ENCODE measurements at regions of chr10 and their contacts with region 1.

Region 1: GRCh38 chr10:122435212-122435827 is 19.1 kb upstream of the ARMS2 start:
- DNase-seq: no peak
- ATAC-seq: peak; percentile 55
- H3K4me3 Mint-ChIP-seq: no peak overlapping the region
- H3K27ac Mint-ChIP-seq: no peak overlapping the region
- H3K4me1 Mint-ChIP-seq: no peaks in the 10 kb centered on the region
- H3K27me3 Mint-ChIP-seq: peaks cover 4% of the 10 kb centered on the region

Region 2: GRCh38 chr10:122267849-122268737 is 167.2 kb before region 1 on chr10:
- CTCF ChIA-PET with region 1: interaction called, 12 read pairs
- POLR2A ChIA-PET with region 1: no interaction called
- DNase-seq: peak; percentile 64
- ATAC-seq: peak; percentile 93
- H3K4me3 Mint-ChIP-seq: no peak overlapping the region
- H3K27ac Mint-ChIP-seq: no peak overlapping the region
- H3K4me1 Mint-ChIP-seq: no peaks in the 10 kb centered on the region
- H3K27me3 Mint-ChIP-seq: peaks cover 6% of the 10 kb centered on the region

Region 3: DNA sequence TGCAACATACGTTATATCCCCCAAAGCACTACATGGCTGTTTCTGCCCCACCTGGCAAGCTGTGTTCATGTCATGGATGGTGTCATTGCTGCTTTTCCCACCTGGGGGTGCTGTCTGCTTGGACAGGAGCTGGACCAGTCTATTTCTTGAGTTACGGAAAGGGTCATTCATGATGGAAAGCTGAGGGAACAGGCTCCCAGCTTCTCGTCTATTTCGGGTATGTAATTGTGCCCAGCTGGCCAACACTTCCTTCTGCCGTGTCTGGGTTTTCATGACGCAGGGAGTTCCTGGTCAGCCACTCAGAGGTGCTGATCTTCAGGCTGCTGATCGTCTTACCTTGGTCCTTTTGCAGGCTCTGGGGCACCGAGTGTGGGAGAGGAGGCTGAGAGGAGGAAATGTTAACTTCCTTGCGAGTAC is 155.6 kb before region 1 on chr10:
- CTCF ChIA-PET with region 1: interaction called, 11 read pairs
- POLR2A ChIA-PET with region 1: no interaction called
- DNase-seq: peak; percentile 31
- ATAC-seq: no peak
- H3K4me3 Mint-ChIP-seq: no peak overlapping the region
- H3K27ac Mint-ChIP-seq: no peak overlapping the region
- H3K4me1 Mint-ChIP-seq: no peaks in the 10 kb centered on the region
- H3K27me3 Mint-ChIP-seq: peaks cover 15% of the 10 kb centered on the region

Region 4: GRCh38 chr10:122298598-122299301 is 136.6 kb before region 1 on chr10:
- CTCF ChIA-PET with region 1: interaction called, 77 read pairs
- POLR2A ChIA-PET with region 1: no interaction called
- DNase-seq: peak; percentile 74
- ATAC-seq: peak; percentile 84
- H3K4me3 Mint-ChIP-seq: peak overlapping the region; percentile 15
- H3K27ac Mint-ChIP-seq: no peak overlapping the region
- H3K4me1 Mint-ChIP-seq: peaks cover 24% of the 10 kb centered on the region
- H3K27me3 Mint-ChIP-seq: peaks cover 22% of the 10 kb centered on the region

Region 5: DNA sequence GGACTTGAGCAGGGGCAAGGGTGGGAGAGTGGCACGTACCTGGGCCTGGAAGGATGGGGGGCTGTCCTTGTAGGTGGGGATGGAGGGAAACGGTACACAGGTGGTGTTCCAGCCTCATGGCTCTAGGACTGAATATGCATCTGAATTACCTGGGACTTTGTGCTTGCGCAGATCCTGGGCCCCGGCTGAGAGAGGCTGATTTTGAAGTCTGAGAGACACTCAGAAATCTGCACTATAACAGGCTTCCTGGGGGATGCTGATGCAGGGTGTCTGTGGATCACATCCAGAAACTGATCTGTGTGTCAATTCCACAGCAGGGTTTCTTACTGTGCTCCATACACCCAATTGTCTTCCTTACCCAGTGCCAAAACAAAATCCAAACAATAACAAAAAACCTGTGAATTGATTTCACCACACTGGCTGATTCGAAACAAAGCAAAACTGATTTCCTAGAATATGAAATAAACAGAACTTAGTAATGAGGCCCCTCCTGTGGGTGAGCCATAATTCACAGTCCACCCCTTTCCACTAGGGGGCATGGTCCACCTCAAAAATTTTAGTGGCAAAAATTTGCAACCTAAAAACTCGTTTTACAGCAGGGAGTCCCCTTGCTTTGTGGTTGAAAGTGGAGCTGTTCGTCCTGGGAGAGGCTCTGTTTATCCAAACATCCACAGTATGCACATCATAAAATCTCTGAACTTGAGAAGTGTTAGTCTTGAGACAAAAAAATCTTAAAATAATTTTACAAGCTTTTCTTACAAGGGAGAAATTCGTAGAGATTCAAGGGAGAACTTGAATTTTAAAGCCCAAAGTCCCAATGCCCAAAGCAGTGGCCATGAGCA is 92.8 kb before region 1 on chr10:
- CTCF ChIA-PET with region 1: interaction called, 78 read pairs
- POLR2A ChIA-PET with region 1: interaction called, 3 read pairs
- DNase-seq: peak; percentile 69
- ATAC-seq: peak; percentile 64
- H3K4me3 Mint-ChIP-seq: no peak overlapping the region
- H3K27ac Mint-ChIP-seq: no peak overlapping the region
- H3K4me1 Mint-ChIP-seq: peaks cover 7% of the 10 kb centered on the region
- H3K27me3 Mint-ChIP-seq: no peaks in the 10 kb centered on the region

Region 6: DNA sequence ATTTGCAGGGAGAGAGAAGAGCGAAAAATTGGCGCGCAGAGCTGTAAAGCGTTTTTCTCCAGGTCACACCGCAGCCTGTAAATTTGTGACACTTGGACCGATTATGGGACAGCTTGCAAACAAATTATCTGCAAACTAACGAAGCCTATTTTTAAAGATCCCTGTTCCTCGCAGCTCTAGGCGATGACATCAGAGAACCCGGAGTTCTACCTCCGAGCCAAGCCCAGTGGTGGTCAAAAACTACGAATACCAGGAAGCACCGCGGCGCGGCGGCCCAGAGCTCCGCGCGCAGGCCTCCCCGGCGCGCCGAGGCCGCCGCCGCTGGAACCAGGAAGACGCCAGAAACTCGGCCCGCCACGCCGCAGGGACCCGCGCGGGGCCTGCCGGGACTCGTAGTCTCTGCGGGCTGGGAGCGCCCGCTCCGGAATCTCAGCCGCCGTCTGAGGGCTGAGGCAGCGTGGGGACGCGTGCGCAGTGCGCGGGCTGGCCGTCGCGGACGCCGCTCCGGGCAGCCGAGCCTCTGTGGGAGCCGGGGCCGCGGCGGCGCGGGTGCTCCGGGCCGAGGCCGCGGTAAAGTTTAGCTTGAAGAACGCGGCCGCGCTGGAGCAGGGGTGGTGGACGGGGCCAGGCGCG is 61.0 kb before region 1 on chr10 and contains the start of gene PLEKHA1:
- CTCF ChIA-PET with region 1: interaction called, 26 read pairs
- POLR2A ChIA-PET with region 1: no interaction called
- DNase-seq: peak; percentile 93
- ATAC-seq: peak; percentile 96
- H3K4me3 Mint-ChIP-seq: peak within 1 kb of the TSS; percentile 91
- H3K27ac Mint-ChIP-seq: peak within 1 kb of the TSS; percentile 89
- H3K4me1 Mint-ChIP-seq: peaks cover 28% of the 10 kb centered on the region
- H3K27me3 Mint-ChIP-seq: peaks cover 21% of the 10 kb centered on the region
- total RNA-seq, gene PLEKHA1: 9.6 to 11.7 TPM

Measured in activated CD8-positive, alpha-beta T cell treated with anti-CD3 and anti-CD28 coated beads, Interleukin-2, amount 10 ng/mL, durations not matched to agents 7 days and 5 days (primary cell).